ENCODE measurements at regions of chr4 and their contacts with region 1.

Region 1: GRCh38 chr4:30719460-30720020 is 629 bp upstream of the PCDH7 start:
- DNase-seq: peak; percentile 53 to 55
- H3K4me3 ChIP-seq: peak overlapping the region; percentile 64
- H3K27ac ChIP-seq: peak overlapping the region; percentile 60
- H3K4me1 ChIP-seq: peaks cover 16% of the 10 kb centered on the region
- H3K27me3 ChIP-seq: no peaks in the 10 kb centered on the region
- CTCF ChIP-seq: no peak

Region 2: GRCh38 chr4:30757357-30757756 is 37.8 kb after region 1 on chr4:
- CTCF ChIA-PET with region 1: interaction called, 3 read pairs
- POLR2A ChIA-PET with region 1: interaction called, 36 read pairs
- intact Hi-C with region 1: loop called (anchors 2 kb)
- DNase-seq: peak; percentile 52 to 89
- H3K4me3 ChIP-seq: peak overlapping the region; percentile 4; the same call in 1 of the 2 replicates
- H3K27ac ChIP-seq: peak overlapping the region; percentile 83
- H3K4me1 ChIP-seq: peaks cover 44% of the 10 kb centered on the region
- H3K27me3 ChIP-seq: no peaks in the 10 kb centered on the region
- CTCF ChIP-seq: no peak

Region 3: GRCh38 chr4:30770049-30770549 is 50.6 kb after region 1 on chr4:
- CTCF ChIA-PET with region 1: interaction called, 3 read pairs
- POLR2A ChIA-PET with region 1: interaction called, 10 read pairs
- intact Hi-C with region 1: loop called (anchors 1 kb)
- DNase-seq: peak; percentile 30 to 95
- H3K4me3 ChIP-seq: peak overlapping the region; percentile 34; the same call in 1 of the 2 replicates
- H3K27ac ChIP-seq: peak overlapping the region; percentile 86
- H3K4me1 ChIP-seq: peaks cover 36% of the 10 kb centered on the region
- H3K27me3 ChIP-seq: no peaks in the 10 kb centered on the region
- CTCF ChIP-seq: no peak

Region 4: GRCh38 chr4:30839583-30840520 is 120.3 kb after region 1 on chr4:
- CTCF ChIA-PET with region 1: interaction called, 12 read pairs
- POLR2A ChIA-PET with region 1: no interaction called
- intact Hi-C with region 1: loop called (anchors 2 kb)
- DNase-seq: peak in 1 of 2 experiments; percentile 59
- H3K4me3 ChIP-seq: no peak overlapping the region
- H3K27ac ChIP-seq: no peak overlapping the region
- H3K4me1 ChIP-seq: peaks cover 27% of the 10 kb centered on the region
- H3K27me3 ChIP-seq: no peaks in the 10 kb centered on the region
- CTCF ChIP-seq: no peak

Region 5: GRCh38 chr4:31045724-31046318 is 326.3 kb after region 1 on chr4:
- CTCF ChIA-PET with region 1: interaction called, 4 read pairs
- POLR2A ChIA-PET with region 1: no interaction called
- intact Hi-C with region 1: loop called (anchors 1 kb)
- DNase-seq: peak; percentile 31 to 57
- H3K4me3 ChIP-seq: no peak overlapping the region
- H3K27ac ChIP-seq: no peak overlapping the region
- H3K4me1 ChIP-seq: peaks cover 16% of the 10 kb centered on the region
- H3K27me3 ChIP-seq: no peaks in the 10 kb centered on the region
- CTCF ChIP-seq: peak; percentile 74

Region 6: DNA sequence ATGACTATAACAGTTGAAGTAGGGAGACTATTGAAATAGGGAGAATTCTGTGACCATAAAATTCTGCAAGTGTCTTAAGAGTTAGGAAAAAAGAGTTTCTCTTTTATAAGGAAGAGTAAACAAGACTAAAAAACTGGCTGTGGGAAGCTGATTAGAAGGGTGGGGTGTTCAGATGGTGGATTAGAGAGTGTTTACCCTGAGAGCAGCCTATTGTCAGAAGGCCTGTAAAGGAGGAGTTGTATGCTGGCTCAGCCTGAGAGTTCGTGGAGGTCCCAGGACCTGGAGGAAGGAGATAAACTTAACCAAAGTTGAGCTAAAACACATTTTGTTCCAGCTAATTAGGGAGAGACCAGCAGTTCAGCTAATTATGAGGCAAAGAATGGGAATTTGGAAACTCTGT is 630.4 kb after region 1 on chr4:
- CTCF ChIA-PET with region 1: no interaction called
- POLR2A ChIA-PET with region 1: no interaction called
- intact Hi-C with region 1: no loop called
- DNase-seq: no peak
- H3K4me3 ChIP-seq: no peak overlapping the region
- H3K27ac ChIP-seq: no peak overlapping the region
- H3K4me1 ChIP-seq: no peaks in the 10 kb centered on the region
- H3K27me3 ChIP-seq: no peaks in the 10 kb centered on the region
- CTCF ChIP-seq: no peak